Activated naive CD4-positive, alpha-beta T cell treated with anti-CD3 and anti-CD28 coated beads for 36 hours (primary cell): ENCODE measurements at regions of chr13 and their contacts with region 1.

Region 1: GRCh38 chr13:46184277-46184699 is 2.3 kb upstream of the LCP1 start:
- DNase-seq: peak; percentile 88
- H3K4me3 Mint-ChIP-seq: peak overlapping the region; percentile 72
- H3K27ac Mint-ChIP-seq: peak overlapping the region; percentile 98
- H3K4me1 Mint-ChIP-seq: peaks cover 25% of the 10 kb centered on the region
- H3K27me3 Mint-ChIP-seq: no peaks in the 10 kb centered on the region

Region 2: GRCh38 chr13:45623515-45624090 is 560.7 kb before region 1 on chr13:
- CTCF ChIA-PET with region 1: no interaction called
- intact Hi-C with region 1: loop called (anchors 1 kb)
- DNase-seq: no peak
- H3K4me3 Mint-ChIP-seq: no peak overlapping the region
- H3K27ac Mint-ChIP-seq: no peak overlapping the region
- H3K4me1 Mint-ChIP-seq: no peaks in the 10 kb centered on the region
- H3K27me3 Mint-ChIP-seq: peaks cover 32% of the 10 kb centered on the region

Region 3: DNA sequence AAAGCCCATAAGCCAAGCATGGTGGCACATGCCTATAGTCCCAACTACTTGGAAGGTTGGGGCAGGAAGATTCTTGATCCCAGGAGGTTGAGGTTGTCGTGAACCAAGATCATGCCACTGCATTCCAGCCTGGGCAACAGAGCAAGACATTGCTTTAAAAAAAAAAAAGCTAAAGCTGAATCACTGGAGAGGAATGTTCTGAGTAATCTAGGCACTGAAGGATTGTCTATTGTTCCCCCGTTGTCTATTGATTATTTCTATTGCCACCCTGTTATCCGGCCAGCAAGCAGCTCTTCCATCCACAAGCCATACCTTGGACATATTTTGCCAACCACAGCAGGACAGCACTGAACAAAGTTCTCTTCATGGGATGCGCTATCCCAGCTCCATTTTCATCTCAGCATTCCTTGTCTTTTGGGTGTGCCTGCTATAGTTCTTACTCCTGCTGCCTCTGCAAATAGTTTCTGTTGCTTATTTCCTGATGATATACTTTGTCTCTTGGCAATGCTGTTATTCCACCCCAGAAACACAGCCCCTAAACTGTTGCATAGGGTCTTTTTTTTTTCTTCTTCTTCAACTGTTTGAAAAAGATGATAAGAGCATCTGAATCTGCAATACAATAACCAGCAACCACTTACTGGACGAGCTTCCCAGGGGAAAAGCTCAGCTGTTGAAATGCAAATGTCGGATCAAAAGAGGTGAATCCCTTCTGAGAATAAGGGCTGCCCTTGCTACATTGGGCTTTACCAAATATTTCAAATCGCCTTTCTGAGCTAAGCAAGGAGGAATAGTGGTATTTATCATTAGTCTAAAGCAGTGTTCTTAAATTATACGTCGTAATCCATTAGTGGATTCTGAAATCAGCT is 310.6 kb before region 1 on chr13:
- CTCF ChIA-PET with region 1: no interaction called
- intact Hi-C with region 1: no loop called
- DNase-seq: no peak
- H3K4me3 Mint-ChIP-seq: no peak overlapping the region
- H3K27ac Mint-ChIP-seq: no peak overlapping the region
- H3K4me1 Mint-ChIP-seq: no peaks in the 10 kb centered on the region
- H3K27me3 Mint-ChIP-seq: no peaks in the 10 kb centered on the region

Region 4: DNA sequence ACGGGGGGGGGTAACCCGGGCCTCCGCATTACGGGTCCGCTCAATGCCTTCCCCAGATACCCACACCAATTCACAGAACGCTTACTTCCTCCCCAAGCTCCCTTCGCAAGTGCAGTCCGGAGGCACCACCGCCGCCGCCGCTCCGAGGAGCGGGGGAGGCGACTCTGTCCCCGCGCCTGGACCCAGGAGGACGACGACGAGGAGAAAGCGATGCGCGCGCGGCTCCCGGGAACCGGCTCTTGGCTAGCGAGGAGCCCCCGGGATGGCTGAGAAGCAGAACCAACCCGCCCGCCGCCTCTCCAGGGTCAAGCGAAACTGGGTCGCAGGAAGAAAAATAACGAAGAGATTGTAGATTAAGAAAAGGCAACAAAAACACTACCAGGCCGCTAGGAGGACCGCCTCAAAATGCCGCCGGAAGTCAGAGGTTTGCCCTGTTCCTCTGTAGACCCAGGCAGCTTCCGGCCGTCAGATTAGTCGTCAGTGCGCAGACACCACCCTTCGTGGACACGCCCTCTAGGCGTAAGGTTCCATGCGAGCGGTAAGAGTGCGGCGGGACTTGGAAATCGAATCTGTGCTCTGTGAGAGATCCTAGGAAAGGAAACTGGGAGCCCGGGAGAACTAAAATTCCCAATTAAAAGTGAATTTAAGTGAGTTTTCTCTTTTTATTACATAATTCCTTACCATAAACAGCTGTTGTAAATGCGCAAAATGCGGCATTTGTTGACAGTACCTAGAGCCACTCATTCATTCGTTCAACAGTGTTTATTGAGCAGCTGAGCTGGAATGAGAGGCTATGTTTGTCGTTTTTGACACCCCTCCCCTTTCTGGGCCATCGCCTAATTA is 131.7 kb before region 1 on chr13 and contains the start of gene ZC3H13:
- CTCF ChIA-PET with region 1: no interaction called
- intact Hi-C with region 1: loop called (anchors 1 kb)
- DNase-seq: peak; percentile 97
- H3K4me3 Mint-ChIP-seq: peak within 1 kb of the TSS; percentile 81
- H3K27ac Mint-ChIP-seq: peak within 1 kb of the TSS; percentile 94
- H3K4me1 Mint-ChIP-seq: peaks cover 29% of the 10 kb centered on the region
- H3K27me3 Mint-ChIP-seq: peaks cover 4% of the 10 kb centered on the region
- total RNA-seq, gene ZC3H13: 38.2 to 42.2 TPM

Region 5: GRCh38 chr13:46160471-46161066 is 23.7 kb before region 1 on chr13:
- CTCF ChIA-PET with region 1: interaction called, 106 read pairs
- intact Hi-C with region 1: loop called (anchors 1 kb)
- DNase-seq: peak; percentile 51
- H3K4me3 Mint-ChIP-seq: peak overlapping the region; percentile 51
- H3K27ac Mint-ChIP-seq: peak overlapping the region; percentile 94
- H3K4me1 Mint-ChIP-seq: peaks cover 67% of the 10 kb centered on the region
- H3K27me3 Mint-ChIP-seq: no peaks in the 10 kb centered on the region

Region 6: GRCh38 chr13:46211483-46212351 is 27.4 kb after region 1 on chr13 and contains the start of gene LRRC63:
- CTCF ChIA-PET with region 1: no interaction called
- intact Hi-C with region 1: loop called (anchors 1 kb)
- DNase-seq: peak; percentile 83
- H3K4me3 Mint-ChIP-seq: peak within 1 kb of the TSS; percentile 91
- H3K27ac Mint-ChIP-seq: peak within 1 kb of the TSS; percentile 91
- H3K4me1 Mint-ChIP-seq: peaks cover 14% of the 10 kb centered on the region
- H3K27me3 Mint-ChIP-seq: no peaks in the 10 kb centered on the region
- total RNA-seq, gene LRRC63: 0.24 to 0.32 TPM

Region 7: GRCh38 chr13:46321494-46322225 is 137.4 kb after region 1 on chr13:
- CTCF ChIA-PET with region 1: interaction called, 6 read pairs
- intact Hi-C with region 1: loop called (anchors 1 kb)
- DNase-seq: peak; percentile 89
- H3K4me3 Mint-ChIP-seq: peak overlapping the region; percentile 81
- H3K27ac Mint-ChIP-seq: peak overlapping the region; percentile 93
- H3K4me1 Mint-ChIP-seq: peaks cover 36% of the 10 kb centered on the region
- H3K27me3 Mint-ChIP-seq: no peaks in the 10 kb centered on the region

Region 8: DNA sequence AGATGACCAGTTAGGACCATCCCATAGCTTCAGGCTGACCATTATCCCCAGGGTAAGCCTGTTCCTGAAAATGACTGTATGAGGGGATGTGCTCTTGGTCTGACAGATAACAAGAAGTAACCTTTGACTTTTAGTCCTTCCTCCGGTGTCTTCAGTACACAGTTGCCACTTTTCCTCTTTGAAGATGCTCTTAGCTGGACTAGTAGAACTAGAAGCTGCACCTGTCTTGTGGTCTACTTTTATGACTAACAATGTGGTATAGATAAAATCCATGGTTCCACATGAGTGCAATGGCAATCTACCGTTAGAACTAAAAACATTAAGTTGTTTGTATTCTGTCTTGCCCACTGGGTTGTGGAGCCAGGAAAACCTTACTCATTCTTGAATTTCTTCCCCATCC is 208.7 kb after region 1 on chr13:
- CTCF ChIA-PET with region 1: no interaction called
- intact Hi-C with region 1: no loop called
- DNase-seq: no peak
- H3K4me3 Mint-ChIP-seq: no peak overlapping the region
- H3K27ac Mint-ChIP-seq: no peak overlapping the region
- H3K4me1 Mint-ChIP-seq: peaks cover 15% of the 10 kb centered on the region
- H3K27me3 Mint-ChIP-seq: no peaks in the 10 kb centered on the region

Region 9: GRCh38 chr13:46553886-46554858 is 369.9 kb after region 1 on chr13:
- CTCF ChIA-PET with region 1: no interaction called
- intact Hi-C with region 1: loop called (anchors 5 kb)
- DNase-seq: peak; percentile 79
- H3K4me3 Mint-ChIP-seq: peak overlapping the region; percentile 91
- H3K27ac Mint-ChIP-seq: peak overlapping the region; percentile 86
- H3K4me1 Mint-ChIP-seq: peaks cover 40% of the 10 kb centered on the region
- H3K27me3 Mint-ChIP-seq: no peaks in the 10 kb centered on the region